PC-9 (cell line): ENCODE measurements at regions of chr12 and their contacts with region 1.

Region 1: GRCh38 chr12:62793256-62794217 is 141.4 kb downstream of the PPM1H start:
- DNase-seq: peak; percentile 80 to 82
- H3K4me3 ChIP-seq: no peak overlapping the region
- H3K27ac ChIP-seq: peak overlapping the region; percentile 76
- H3K4me1 ChIP-seq: peaks cover 21% of the 10 kb centered on the region
- H3K27me3 ChIP-seq: no peaks in the 10 kb centered on the region
- CTCF ChIP-seq: peak; percentile 94

Region 2: GRCh38 chr12:62435303-62436163 is 358.0 kb before region 1 on chr12:
- CTCF ChIA-PET with region 1: no interaction called
- POLR2A ChIA-PET with region 1: no interaction called
- intact Hi-C with region 1: loop called (anchors 1 kb)
- DNase-seq: peak in 1 of 2 experiments; percentile 21
- H3K4me3 ChIP-seq: peak overlapping the region; percentile 38; the same call in 1 of the 2 replicates
- H3K27ac ChIP-seq: no peak overlapping the region
- H3K4me1 ChIP-seq: no peaks in the 10 kb centered on the region
- H3K27me3 ChIP-seq: no peaks in the 10 kb centered on the region
- CTCF ChIP-seq: no peak

Region 3: GRCh38 chr12:62581288-62582064 is 212.1 kb before region 1 on chr12:
- CTCF ChIA-PET with region 1: interaction called, 7 read pairs
- POLR2A ChIA-PET with region 1: no interaction called
- intact Hi-C with region 1: loop called (anchors 1 kb)
- DNase-seq: peak in 1 of 2 experiments; percentile 45
- H3K4me3 ChIP-seq: no peak overlapping the region
- H3K27ac ChIP-seq: no peak overlapping the region
- H3K4me1 ChIP-seq: no peaks in the 10 kb centered on the region
- H3K27me3 ChIP-seq: no peaks in the 10 kb centered on the region
- CTCF ChIP-seq: peak; percentile 80

Region 4: DNA sequence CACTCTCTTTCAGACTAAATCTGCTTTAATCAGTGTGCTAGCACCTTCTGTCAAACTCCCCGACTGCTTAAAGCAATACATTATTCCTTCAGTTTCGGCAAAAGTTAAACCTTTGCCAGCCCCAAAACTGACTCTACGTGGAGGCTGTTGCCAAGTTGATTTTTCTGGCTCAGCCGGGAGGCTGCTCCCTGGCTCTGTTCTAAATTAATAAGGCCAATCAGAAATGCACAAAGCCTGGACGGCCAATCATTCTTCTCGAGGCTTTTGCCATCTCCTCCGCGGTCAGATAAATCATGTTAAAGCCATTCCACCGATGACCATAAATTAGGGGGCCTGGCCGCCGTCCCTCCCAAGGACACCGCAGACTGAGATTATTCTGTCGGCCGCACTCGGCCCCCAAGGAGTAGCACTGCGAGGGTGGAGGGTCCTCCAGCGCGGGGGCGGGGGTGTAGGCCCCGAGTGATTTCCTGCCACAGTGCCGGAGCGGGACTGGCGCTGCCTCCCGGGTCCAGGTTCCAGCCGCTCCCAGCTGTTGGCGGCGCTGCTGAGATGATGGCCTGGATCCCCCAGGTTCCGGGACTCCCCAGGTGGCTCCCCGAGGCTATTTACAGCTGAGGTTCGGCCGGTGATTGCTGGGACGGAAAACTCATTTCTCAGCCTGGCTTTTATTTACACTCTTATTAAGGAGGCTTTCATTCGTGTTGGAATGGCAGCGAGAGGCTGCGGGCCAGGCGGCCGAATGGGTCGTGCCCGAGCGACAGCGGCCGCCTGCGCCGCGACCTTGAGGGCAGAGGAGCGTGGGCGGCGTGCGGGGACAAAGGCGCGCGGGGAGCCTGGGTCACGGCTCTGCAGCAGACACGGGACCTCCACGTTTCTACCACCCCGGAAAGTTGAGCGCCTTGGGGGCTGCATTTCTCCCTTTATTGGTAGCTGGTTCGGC is 161.8 kb before region 1 on chr12:
- CTCF ChIA-PET with region 1: interaction called, 3 read pairs
- POLR2A ChIA-PET with region 1: no interaction called
- intact Hi-C with region 1: loop called (anchors 1 kb)
- DNase-seq: peak; percentile 57 to 66
- H3K4me3 ChIP-seq: peak overlapping the region; percentile 61
- H3K27ac ChIP-seq: peak overlapping the region; percentile 64
- H3K4me1 ChIP-seq: 0 out of 2 replicates have a peak, but pooled peaks cover 8% of the 10 kb centered on the region
- H3K27me3 ChIP-seq: no peaks in the 10 kb centered on the region
- CTCF ChIP-seq: no peak

Region 5: GRCh38 chr12:62732861-62733427 is 60.6 kb before region 1 on chr12:
- CTCF ChIA-PET with region 1: no interaction called
- POLR2A ChIA-PET with region 1: interaction called, 4 read pairs
- intact Hi-C with region 1: loop called (anchors 2 kb)
- DNase-seq: peak; percentile 41 to 79
- H3K4me3 ChIP-seq: peak overlapping the region; percentile 18; the same call in 1 of the 2 replicates
- H3K27ac ChIP-seq: peak overlapping the region; percentile 96
- H3K4me1 ChIP-seq: peaks cover 86% of the 10 kb centered on the region
- H3K27me3 ChIP-seq: no peaks in the 10 kb centered on the region
- CTCF ChIP-seq: no peak